ENCODE measurements at regions of chr16 and their contacts with region 1.

Region 1: GRCh38 chr16:88770461-88771293 is 14.3 kb downstream of the PIEZO1 start:
- DNase-seq: peak in 1 of 2 experiments; percentile 69
- H3K4me3 ChIP-seq: no peak overlapping the region
- H3K27ac ChIP-seq: no peak overlapping the region
- H3K4me1 ChIP-seq: peaks cover 6 to 41% (median 29%) of the 10 kb centered on the region in 4 experiments
- H3K27me3 ChIP-seq: no peaks in the 10 kb centered on the region
- CTCF ChIP-seq: no peak
- EP300 ChIP-seq: no peak
- POLR2A ChIP-seq: no peak
- RAD21 ChIP-seq: no peak

Region 2: DNA sequence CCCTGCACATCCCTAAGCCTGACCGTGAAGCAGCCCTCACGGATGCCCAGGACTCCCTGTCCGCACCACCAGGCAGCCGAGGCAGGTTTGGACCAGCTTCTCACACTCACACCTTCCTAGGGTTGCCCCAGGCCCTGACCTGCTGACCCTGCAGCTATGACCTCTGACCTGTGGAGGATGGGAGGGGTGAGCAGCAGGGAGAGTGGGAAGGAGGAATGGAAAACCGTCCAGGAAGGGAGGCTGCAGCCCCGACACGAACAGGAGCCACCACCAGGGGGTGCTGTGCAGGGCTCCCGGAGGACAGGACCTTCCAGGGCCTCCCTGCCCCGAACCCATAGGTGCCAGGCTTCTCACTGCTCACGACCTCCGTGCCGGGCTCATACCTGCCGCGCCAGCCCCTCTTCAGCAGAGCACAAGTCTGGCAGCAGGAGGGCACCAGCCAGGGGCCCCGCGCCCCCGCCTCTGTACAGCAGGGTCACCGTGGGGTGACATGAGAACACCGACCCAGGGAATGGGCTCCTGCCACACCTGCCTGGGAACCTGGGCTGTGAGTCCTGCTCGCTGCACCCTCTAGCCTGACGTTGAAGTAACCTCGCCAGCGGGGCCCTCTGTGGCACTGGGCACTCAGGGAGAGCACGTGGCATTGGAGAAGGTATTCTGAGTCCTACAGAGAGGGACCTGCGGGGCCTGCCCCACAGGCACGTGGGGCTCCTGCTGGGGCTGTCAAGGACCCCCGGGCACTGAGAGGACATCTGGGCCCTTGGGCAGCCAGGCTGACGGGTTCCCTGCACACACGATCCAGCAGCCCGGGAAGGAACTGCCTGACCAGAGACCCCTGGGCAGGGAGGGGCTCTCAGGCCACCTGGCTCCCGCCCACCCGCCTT is 26.7 kb before region 1 on chr16:
- CTCF ChIA-PET with region 1: interaction called, 251 read pairs
- POLR2A ChIA-PET with region 1: no interaction called
- DNase-seq: peak; percentile 39 to 98
- H3K4me3 ChIP-seq: no peak overlapping the region
- H3K27ac ChIP-seq: no peak overlapping the region
- H3K4me1 ChIP-seq: peaks cover 0 to 11% (median 6%) of the 10 kb centered on the region in 4 experiments; a peak in 4 of 7 replicates
- H3K27me3 ChIP-seq: no peaks in the 10 kb centered on the region
- CTCF ChIP-seq: peak; percentile 81 to 96 (median 93)
- EP300 ChIP-seq: no peak
- POLR2A ChIP-seq: no peak
- RAD21 ChIP-seq: peak; percentile 44 to 51

Region 3: DNA sequence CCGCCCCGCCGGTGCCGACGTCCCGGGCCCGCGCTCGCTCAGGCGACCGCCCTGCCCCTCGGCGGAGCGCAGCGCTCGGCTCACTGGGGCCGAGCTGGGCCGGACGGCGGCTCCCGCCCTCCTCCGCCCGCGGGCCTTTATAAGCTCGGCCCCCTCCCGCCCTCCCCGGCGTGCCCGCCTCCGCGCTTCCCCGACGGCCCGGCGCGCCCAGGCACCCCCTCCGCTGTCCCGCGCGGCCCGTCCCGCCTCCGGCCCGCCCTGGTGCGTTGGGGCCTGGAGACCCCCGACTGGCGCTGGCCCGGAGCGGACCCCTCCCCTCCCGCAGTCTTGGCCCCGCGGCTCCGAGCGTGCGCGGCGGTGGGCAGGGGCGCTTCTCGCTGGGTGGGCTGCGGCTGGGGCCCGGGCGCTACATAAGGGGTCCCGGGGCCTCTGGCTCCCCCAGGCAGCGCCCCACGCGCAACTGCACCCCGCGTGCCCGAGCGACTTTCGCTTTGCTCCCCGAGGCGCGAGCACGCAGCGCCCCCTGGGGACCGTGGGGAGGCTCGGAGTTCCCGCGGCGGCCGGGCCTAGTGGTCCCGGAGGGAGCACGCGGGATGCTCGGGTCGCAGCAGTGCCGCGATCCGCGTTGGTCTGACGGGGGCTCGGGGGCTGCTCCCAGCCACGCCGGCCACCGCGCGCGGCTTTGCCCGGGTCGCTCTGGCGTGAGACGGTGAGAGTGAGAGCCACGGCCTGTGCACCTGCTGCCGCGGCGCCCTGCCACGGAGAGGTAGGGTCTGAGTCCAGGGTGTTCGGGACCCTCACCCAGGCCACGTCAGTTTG is 14.6 kb after region 1 on chr16 and contains the start of gene PIEZO1:
- CTCF ChIA-PET with region 1: interaction called, 94 read pairs
- POLR2A ChIA-PET with region 1: interaction called, 12 read pairs
- DNase-seq: no peak
- H3K4me3 ChIP-seq: peak within 1 kb of the TSS; percentile 28 to 71 (median 50)
- H3K27ac ChIP-seq: no peak within 1 kb of the TSS
- H3K4me1 ChIP-seq: peaks cover 0 to 8% (median 4%) of the 10 kb centered on the region in 4 experiments; a peak in 5 of 7 replicates
- H3K27me3 ChIP-seq: peaks cover 0 to 6% (median 3%) of the 10 kb centered on the region in 4 experiments; a peak in 3 of 7 replicates
- CTCF ChIP-seq: peak; percentile 49 to 67 (median 55)
- EP300 ChIP-seq: no peak
- POLR2A ChIP-seq: no peak; a peak in 1 of 3 replicates
- RAD21 ChIP-seq: peak; percentile 21 to 54; a peak in 3 of 4 replicates
- total RNA-seq, gene PIEZO1: 63.6 and 67.5 TPM in 2 replicates

Region 4: GRCh38 chr16:88925101-88925887 is 154.6 kb after region 1 on chr16:
- CTCF ChIA-PET with region 1: no interaction called
- POLR2A ChIA-PET with region 1: no interaction called
- DNase-seq: peak in 1 of 2 experiments; percentile 49
- H3K4me3 ChIP-seq: no peak overlapping the region
- H3K27ac ChIP-seq: no peak overlapping the region
- H3K4me1 ChIP-seq: peaks cover 0 to 30% (median 16%) of the 10 kb centered on the region in 4 experiments; a peak in 5 of 7 replicates
- H3K27me3 ChIP-seq: no peaks in the 10 kb centered on the region
- CTCF ChIP-seq: peak; percentile 7 to 32 (median 31); a peak in 3 of 4 replicates
- EP300 ChIP-seq: no peak
- POLR2A ChIP-seq: no peak
- RAD21 ChIP-seq: peak; percentile 22 to 27; a peak in 3 of 4 replicates